ENCODE measurements at regions of chr7 and their contacts with region 1.

Region 1: GRCh38 chr7:76359111-76359978 is 554 bp upstream of the YWHAG start:
- DNase-seq: peak; percentile 98
- ATAC-seq: peak; percentile 96
- H3K4me3 Mint-ChIP-seq: peak overlapping the region; percentile 99
- H3K27ac Mint-ChIP-seq: peak overlapping the region; percentile 96
- H3K4me1 Mint-ChIP-seq: peaks cover 41% of the 10 kb centered on the region
- H3K27me3 Mint-ChIP-seq: no peaks in the 10 kb centered on the region

Region 2: DNA sequence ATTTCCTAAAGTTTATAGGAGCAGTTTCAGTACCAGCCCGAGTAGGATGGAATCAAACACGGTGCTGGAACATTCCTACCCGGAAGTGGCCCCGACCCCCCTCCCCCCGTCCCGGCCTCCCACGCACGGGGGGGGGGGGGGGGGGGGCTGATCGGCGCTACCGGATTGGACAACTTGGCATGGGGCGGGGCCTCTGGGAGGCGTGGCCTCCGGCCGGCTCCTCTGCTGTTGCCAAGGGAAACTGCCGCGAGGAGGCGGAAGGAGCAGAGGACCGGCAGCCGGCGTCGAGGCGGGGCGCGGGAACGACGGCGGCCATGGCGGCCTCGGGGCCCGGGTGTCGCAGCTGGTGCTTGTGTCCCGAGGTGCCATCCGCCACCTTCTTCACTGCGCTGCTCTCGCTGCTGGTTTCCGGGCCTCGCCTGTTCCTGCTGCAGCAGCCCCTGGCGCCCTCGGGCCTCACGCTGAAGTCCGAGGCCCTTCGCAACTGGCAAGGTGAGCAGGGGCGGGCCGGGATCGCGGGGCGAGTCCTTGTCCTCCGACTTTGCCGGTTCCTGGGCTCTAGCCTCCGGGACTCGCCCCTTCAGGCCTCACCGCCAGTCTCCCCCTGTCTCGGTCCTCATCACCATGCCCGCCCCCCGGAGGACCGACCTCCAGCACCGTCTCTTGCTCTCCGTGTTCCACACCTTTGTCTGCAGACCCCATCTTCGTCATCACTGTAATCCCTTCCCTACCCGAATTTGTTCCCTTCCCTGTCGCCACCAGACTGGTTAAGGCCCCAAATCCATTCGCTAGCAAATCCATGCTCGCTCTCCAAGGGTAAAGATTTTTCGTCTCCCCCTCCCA is 480.4 kb before region 1 on chr7 and contains the start of gene RHBDD2:
- CTCF ChIA-PET with region 1: no interaction called
- POLR2A ChIA-PET with region 1: no interaction called
- intact Hi-C with region 1: loop called in 1 of 2 experiments (anchors 1 kb)
- DNase-seq: peak; percentile 99
- ATAC-seq: peak; percentile 97
- H3K4me3 Mint-ChIP-seq: peak within 1 kb of the TSS; percentile 100
- H3K27ac Mint-ChIP-seq: peak within 1 kb of the TSS; percentile 97
- H3K4me1 Mint-ChIP-seq: peaks cover 34% of the 10 kb centered on the region
- H3K27me3 Mint-ChIP-seq: no peaks in the 10 kb centered on the region
- total RNA-seq, gene RHBDD2: 21.6 to 23.2 TPM

Region 3: GRCh38 chr7:76201730-76202665 is 157.3 kb before region 1 on chr7 and contains the start of gene SRRM3:
- CTCF ChIA-PET with region 1: no interaction called
- POLR2A ChIA-PET with region 1: no interaction called
- intact Hi-C with region 1: no loop called
- DNase-seq: peak; percentile 92
- ATAC-seq: peak; percentile 92
- H3K4me3 Mint-ChIP-seq: no peak within 1 kb of the TSS
- H3K27ac Mint-ChIP-seq: no peak within 1 kb of the TSS
- H3K4me1 Mint-ChIP-seq: no peaks in the 10 kb centered on the region
- H3K27me3 Mint-ChIP-seq: peaks cover 14% of the 10 kb centered on the region
- total RNA-seq, gene SRRM3: 0.09 TPM in 1 of 2 experiments, not detected in the other

Region 4: GRCh38 chr7:76281006-76281705 is 78.2 kb before region 1 on chr7:
- CTCF ChIA-PET with region 1: no interaction called
- POLR2A ChIA-PET with region 1: no interaction called
- intact Hi-C with region 1: no loop called
- DNase-seq: no peak
- ATAC-seq: peak; percentile 14
- H3K4me3 Mint-ChIP-seq: peak overlapping the region; percentile 58
- H3K27ac Mint-ChIP-seq: no peak overlapping the region
- H3K4me1 Mint-ChIP-seq: peaks cover 11% of the 10 kb centered on the region
- H3K27me3 Mint-ChIP-seq: peaks cover 35% of the 10 kb centered on the region

Region 5: GRCh38 chr7:76291343-76292212 is 67.8 kb before region 1 on chr7:
- CTCF ChIA-PET with region 1: no interaction called
- POLR2A ChIA-PET with region 1: no interaction called
- intact Hi-C with region 1: loop called (anchors 1 kb)
- DNase-seq: peak; percentile 94
- ATAC-seq: peak; percentile 96
- H3K4me3 Mint-ChIP-seq: peak overlapping the region; percentile 20
- H3K27ac Mint-ChIP-seq: peak overlapping the region; percentile 94
- H3K4me1 Mint-ChIP-seq: peaks cover 12% of the 10 kb centered on the region
- H3K27me3 Mint-ChIP-seq: peaks cover 2% of the 10 kb centered on the region

Region 6: DNA sequence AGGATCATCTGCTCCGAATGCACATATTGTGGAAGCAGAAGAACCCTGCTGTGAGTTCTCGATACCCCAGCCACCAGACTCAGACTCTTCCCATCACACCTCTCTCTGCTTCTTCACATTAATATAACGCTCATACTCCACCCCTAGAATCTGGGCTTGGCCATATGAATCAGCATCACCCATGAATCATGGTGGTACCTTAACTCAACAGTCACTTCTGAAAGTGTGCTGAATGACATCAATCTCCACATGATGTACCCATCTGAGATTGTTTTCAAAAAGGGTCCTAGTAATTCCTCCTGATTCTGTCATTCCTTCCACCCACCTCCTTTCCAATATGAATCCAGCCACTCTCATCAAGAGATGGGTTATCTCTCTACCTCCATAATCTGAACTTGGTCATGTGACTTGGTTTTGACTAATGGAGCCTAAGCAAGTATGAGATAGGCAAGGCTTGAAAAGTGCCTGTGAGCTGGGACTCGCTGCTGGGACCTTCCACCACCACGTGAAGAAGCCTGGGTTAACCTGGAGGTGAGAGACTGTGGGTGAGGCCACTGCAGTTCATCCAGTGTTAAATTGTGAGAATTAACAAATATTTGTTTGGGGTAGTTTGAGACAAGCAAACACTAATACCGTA is 15.9 kb before region 1 on chr7:
- CTCF ChIA-PET with region 1: interaction called, 6 read pairs
- POLR2A ChIA-PET with region 1: interaction called, 10 read pairs
- intact Hi-C with region 1: loop called (anchors 1 kb)
- DNase-seq: peak; percentile 46
- ATAC-seq: peak; percentile 96
- H3K4me3 Mint-ChIP-seq: no peak overlapping the region
- H3K27ac Mint-ChIP-seq: peak overlapping the region; percentile 34
- H3K4me1 Mint-ChIP-seq: peaks cover 74% of the 10 kb centered on the region
- H3K27me3 Mint-ChIP-seq: no peaks in the 10 kb centered on the region

Region 7: DNA sequence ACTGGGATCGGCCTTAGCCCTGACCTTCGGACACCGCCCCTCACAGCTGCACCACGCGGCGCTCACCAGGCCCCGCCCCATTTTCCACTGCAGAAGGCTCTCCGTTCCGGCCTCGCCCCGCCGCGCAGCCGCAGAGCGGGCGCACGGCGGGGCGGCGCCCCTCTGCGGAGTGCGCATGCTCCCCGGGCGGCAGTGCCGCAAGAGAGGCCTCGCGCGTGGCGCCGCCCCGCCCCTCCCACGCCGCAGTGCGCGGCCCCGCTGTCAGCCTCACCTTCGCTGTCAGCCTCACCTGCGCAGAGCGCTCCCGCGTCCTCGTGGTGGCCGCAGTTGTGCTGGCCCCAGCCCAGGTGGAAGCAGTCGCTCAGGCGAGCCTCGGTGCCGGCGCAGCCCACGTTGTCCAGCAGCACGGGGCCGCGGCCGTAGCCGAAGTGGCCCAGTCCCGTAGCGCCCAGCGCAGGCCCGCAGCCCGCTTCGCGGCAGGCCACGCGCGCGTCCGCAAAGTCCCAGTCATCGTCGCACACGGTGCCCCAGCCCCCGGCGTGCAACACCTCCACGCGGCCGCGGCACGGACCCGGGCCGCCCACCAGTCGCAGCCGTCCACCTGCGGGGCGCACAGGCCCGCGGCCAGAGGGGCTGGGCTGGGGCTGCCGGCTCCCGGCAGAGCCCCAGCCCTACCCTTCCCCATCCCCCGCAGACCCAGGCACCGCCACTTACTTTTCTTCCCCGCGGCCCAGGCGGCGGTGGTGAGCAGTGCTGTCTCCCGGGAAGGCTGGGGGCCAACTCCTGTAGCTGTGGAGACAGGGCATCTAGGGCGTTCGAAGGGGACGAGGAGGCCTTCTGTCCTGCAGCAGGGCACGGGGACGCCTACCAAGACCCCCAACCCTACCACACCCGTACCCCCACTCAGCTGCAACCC is 34.0 kb after region 1 on chr7:
- CTCF ChIA-PET with region 1: no interaction called
- POLR2A ChIA-PET with region 1: interaction called, 3 read pairs
- intact Hi-C with region 1: loop called (anchors 1 kb)
- DNase-seq: peak; percentile 94
- ATAC-seq: peak; percentile 85
- H3K4me3 Mint-ChIP-seq: peak overlapping the region; percentile 76
- H3K27ac Mint-ChIP-seq: peak overlapping the region; percentile 98
- H3K4me1 Mint-ChIP-seq: peaks cover 22% of the 10 kb centered on the region
- H3K27me3 Mint-ChIP-seq: no peaks in the 10 kb centered on the region

Measured in activated CD4-positive, alpha-beta T cell treated with anti-CD3 and anti-CD28 coated beads for 36 hours (primary cell).